ENCODE measurements at regions of chr6 and their contacts with region 1.

Region 1: GRCh38 chr6:33082702-33083101 is 6.9 kb downstream of the HLA-DPB1 start:
- DNase-seq: peak; percentile 38 to 70 (median 67)
- ATAC-seq: peak; percentile 69 to 87 (median 82)
- H3K4me3 ChIP-seq: no peak overlapping the region
- H3K27ac ChIP-seq: no peak overlapping the region
- H3K4me1 ChIP-seq: peaks cover 0 to 7% (median 0%) of the 10 kb centered on the region in 4 donors
- H3K27me3 ChIP-seq: no peaks in the 10 kb centered on the region
- CTCF ChIP-seq: peak; percentile 62 to 79 (median 71)
- POLR2A ChIP-seq: no peak

Region 2: GRCh38 chr6:33008944-33009861 is 73.5 kb before region 1 on chr6 and contains the start of gene HLA-DOA:
- intact Hi-C with region 1: loop called (anchors 5 kb)
- DNase-seq: no peak
- ATAC-seq: peak; percentile 53 to 74 (median 61)
- H3K4me3 ChIP-seq: peak within 1 kb of the TSS in 1 of 3 donors; percentile 16
- H3K27ac ChIP-seq: no peak within 1 kb of the TSS
- H3K4me1 ChIP-seq: no peaks in the 10 kb centered on the region
- H3K27me3 ChIP-seq: peaks cover 0 to 2% of the 10 kb centered on the region in 2 donors
- CTCF ChIP-seq: no peak
- POLR2A ChIP-seq: no peak
- total RNA-seq, gene HLA-DOA: 0.37 to 3.3 (median 1.2) TPM

Region 3: GRCh38 chr6:33014841-33015634 is 67.7 kb before region 1 on chr6:
- intact Hi-C with region 1: loop called in 1 of 2 experiments (anchors 5 kb)
- DNase-seq: no peak
- ATAC-seq: peak; percentile 76 to 80 (median 78)
- H3K4me3 ChIP-seq: no peak overlapping the region
- H3K27ac ChIP-seq: no peak overlapping the region
- H3K4me1 ChIP-seq: peaks cover 0 to 7% (median 0%) of the 10 kb centered on the region in 4 donors
- H3K27me3 ChIP-seq: peaks cover 0 to 2% of the 10 kb centered on the region in 2 donors
- CTCF ChIP-seq: peak; percentile 70 to 91 (median 84)
- POLR2A ChIP-seq: no peak

Region 4: GRCh38 chr6:33172688-33173534 is 90.2 kb after region 1 on chr6:
- intact Hi-C with region 1: no loop called
- DNase-seq: peak in 1 of 3 donors; percentile 39
- ATAC-seq: peak; percentile 23 to 62 (median 50)
- H3K4me3 ChIP-seq: no peak overlapping the region
- H3K27ac ChIP-seq: no peak overlapping the region
- H3K4me1 ChIP-seq: no peaks in the 10 kb centered on the region
- H3K27me3 ChIP-seq: no peaks in the 10 kb centered on the region
- CTCF ChIP-seq: peak; percentile 36 to 49 (median 36)
- POLR2A ChIP-seq: no peak

Region 5: DNA sequence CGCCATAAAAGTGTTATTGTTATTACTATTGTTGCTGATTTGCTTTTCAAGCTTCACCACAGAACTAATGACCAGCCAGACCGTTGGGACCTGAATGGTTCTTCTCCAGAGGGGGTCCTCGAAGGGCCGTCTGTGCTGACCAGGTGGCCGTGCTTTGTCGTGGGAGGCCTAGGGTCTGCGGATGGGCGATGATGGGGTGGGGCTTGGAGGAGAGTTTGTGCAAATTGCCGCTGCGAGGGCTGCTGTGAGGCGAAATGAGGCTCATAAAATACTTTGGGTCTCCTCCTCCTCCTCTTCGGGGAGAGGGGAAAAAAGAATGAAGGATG is 240.9 kb after region 1 on chr6:
- intact Hi-C with region 1: no loop called
- DNase-seq: no peak
- ATAC-seq: no peak
- H3K4me3 ChIP-seq: peak overlapping the region; percentile 46 to 77 (median 66)
- H3K27ac ChIP-seq: peak overlapping the region; percentile 60 to 77 (median 71)
- H3K4me1 ChIP-seq: peaks cover 0 to 39% (median 12%) of the 10 kb centered on the region in 4 donors
- H3K27me3 ChIP-seq: no peaks in the 10 kb centered on the region
- CTCF ChIP-seq: no peak
- POLR2A ChIP-seq: no peak

Measured in right lobe of liver (tissue), 6 donors.